Heart left ventricle (tissue), 16 donors: ENCODE measurements at regions of chr5 and their contacts with region 1.

Region 1: GRCh38 chr5:150789943-150790611 is 11.5 kb downstream of the SMIM3 start:
- DNase-seq: peak in 2 of 5 donors; percentile 35 to 81
- ATAC-seq: peak; percentile 51 to 95 (median 94)
- H3K4me3 ChIP-seq: peak overlapping the region in 4 of 12 donors; percentile 7 to 10 (median 8)
- H3K27ac ChIP-seq: peak overlapping the region in 10 of 12 donors; percentile 15 to 84 (median 51)
- H3K4me1 ChIP-seq: peaks cover 3 to 83% (median 22%) of the 10 kb centered on the region in 12 donors
- H3K27me3 ChIP-seq: no peaks in the 10 kb centered on the region
- CTCF ChIP-seq: no peak
- POLR2A ChIP-seq: no peak

Region 2: GRCh38 chr5:150710165-150710564 is 79.9 kb before region 1 on chr5:
- intact Hi-C with region 1: no loop called
- DNase-seq: no peak
- ATAC-seq: no peak
- H3K4me3 ChIP-seq: no peak overlapping the region
- H3K27ac ChIP-seq: no peak overlapping the region
- H3K4me1 ChIP-seq: peaks cover 0 to 8% (median 0%) of the 10 kb centered on the region in 12 donors
- H3K27me3 ChIP-seq: no peaks in the 10 kb centered on the region
- CTCF ChIP-seq: peak in 11 of 12 donors; percentile 9 to 50 (median 28)
- POLR2A ChIP-seq: no peak

Region 3: DNA sequence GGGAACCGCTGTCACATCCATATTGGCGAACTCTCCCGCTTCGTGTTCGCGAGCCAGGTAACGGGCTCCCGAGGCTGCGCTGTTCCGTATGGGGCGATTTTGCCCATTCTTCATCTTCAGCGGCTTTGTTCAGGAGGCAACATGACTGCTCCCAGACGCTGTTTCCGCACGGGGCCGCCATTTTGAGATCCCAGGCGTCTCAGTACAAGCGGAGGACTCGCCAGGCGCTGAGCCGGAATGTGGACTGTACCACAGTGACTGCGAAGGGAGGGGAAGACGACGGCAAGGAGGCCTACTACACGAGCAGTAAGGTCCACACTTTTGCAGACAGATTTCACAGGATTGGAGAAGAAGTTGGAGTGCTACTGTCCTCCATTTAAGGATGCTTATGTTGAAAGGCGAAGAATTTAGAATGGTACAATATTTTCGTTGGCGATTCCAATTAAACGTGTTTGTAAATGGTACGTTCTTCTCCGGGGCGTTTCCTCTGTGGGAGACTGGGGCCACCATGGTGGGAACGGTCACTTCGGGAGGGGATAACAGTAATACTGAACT is 156.4 kb after region 1 on chr5:
- intact Hi-C with region 1: no loop called
- DNase-seq: peak; percentile 86 to 92 (median 87)
- ATAC-seq: peak; percentile 98 to 99 (median 99)
- H3K4me3 ChIP-seq: peak overlapping the region; percentile 51 to 83 (median 62)
- H3K27ac ChIP-seq: peak overlapping the region; percentile 75 to 96 (median 87)
- H3K4me1 ChIP-seq: peaks cover 0 to 8% (median 0%) of the 10 kb centered on the region in 12 donors
- H3K27me3 ChIP-seq: no peaks in the 10 kb centered on the region
- CTCF ChIP-seq: no peak
- POLR2A ChIP-seq: no peak

Region 4: GRCh38 chr5:151037561-151038411 is 247.7 kb after region 1 on chr5:
- intact Hi-C with region 1: loop called in 1 of 10 experiments (anchors 10 kb)
- DNase-seq: peak in 2 of 5 donors; percentile 31 to 39
- ATAC-seq: peak; percentile 30 to 65 (median 52)
- H3K4me3 ChIP-seq: no peak overlapping the region
- H3K27ac ChIP-seq: peak overlapping the region; percentile 53 to 85 (median 75)
- H3K4me1 ChIP-seq: peaks cover 12 to 45% (median 32%) of the 10 kb centered on the region in 12 donors
- H3K27me3 ChIP-seq: no peaks in the 10 kb centered on the region
- CTCF ChIP-seq: no peak
- POLR2A ChIP-seq: no peak

Region 5: GRCh38 chr5:151157426-151158286 is 367.6 kb after region 1 on chr5 and contains the start of gene ANXA6:
- intact Hi-C with region 1: loop called in 2 of 10 experiments (anchors 10 kb)
- DNase-seq: peak; percentile 91 to 95 (median 92)
- ATAC-seq: peak; percentile 97 to 99 (median 98)
- H3K4me3 ChIP-seq: peak within 1 kb of the TSS; percentile 58 to 97 (median 86)
- H3K27ac ChIP-seq: peak within 1 kb of the TSS; percentile 70 to 94 (median 90)
- H3K4me1 ChIP-seq: peaks cover 6 to 54% (median 46%) of the 10 kb centered on the region in 12 donors
- H3K27me3 ChIP-seq: no peaks in the 10 kb centered on the region
- CTCF ChIP-seq: no peak
- POLR2A ChIP-seq: peak in 1 of 2 donors; percentile 74
- total RNA-seq, gene ANXA6: 179 to 287 (median 220) TPM